OCI-LY7 (cell line): ENCODE measurements at regions of chr6 and their contacts with region 1.

Region 1: GRCh38 chr6:28683944-28684538 is 158.4 kb downstream of the GPX5 start:
- DNase-seq: peak; percentile 65
- H3K4me3 ChIP-seq: no peak overlapping the region
- H3K27ac ChIP-seq: no peak overlapping the region
- H3K4me1 ChIP-seq: peaks cover 3% of the 10 kb centered on the region
- CTCF ChIP-seq: peak; percentile 85

Region 2: DNA sequence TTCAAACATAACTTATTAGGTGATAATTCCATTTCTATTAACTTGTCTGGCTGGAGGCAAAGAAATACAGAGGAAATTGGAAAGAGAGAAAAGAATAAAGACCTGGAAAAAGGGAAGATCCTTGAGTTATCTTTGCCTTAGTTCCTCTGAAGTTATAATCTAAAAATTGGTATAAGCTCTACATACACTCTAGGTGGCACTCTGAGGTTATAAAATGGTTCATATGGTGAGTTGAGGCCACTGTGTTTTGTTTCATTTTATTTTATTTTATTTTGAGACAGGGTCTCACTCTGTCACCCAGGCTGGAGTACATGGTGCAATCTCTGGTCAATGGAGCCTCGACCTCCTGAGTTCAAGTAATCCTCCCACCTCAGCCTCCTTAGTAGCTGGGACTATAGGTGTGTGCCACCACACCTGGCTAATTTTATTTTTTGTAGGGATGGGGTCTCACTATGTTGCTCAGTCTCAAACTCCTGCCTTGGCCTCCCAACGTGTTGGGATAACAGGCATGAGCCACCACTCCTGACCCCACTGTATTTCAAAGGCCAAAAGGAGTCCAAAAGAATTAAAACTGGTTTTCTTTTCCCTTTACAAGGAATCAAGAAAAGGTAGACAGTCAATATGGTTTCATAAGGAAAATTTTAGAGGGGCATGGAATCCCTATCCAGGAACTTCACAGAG is 187.8 kb before region 1 on chr6:
- CTCF ChIA-PET with region 1: no interaction called
- POLR2A ChIA-PET with region 1: no interaction called
- intact Hi-C with region 1: loop called (anchors 2 kb)
- DNase-seq: peak; percentile 20
- H3K4me3 ChIP-seq: no peak overlapping the region
- H3K27ac ChIP-seq: no peak overlapping the region
- H3K4me1 ChIP-seq: no peaks in the 10 kb centered on the region
- CTCF ChIP-seq: peak; percentile 64

Region 3: DNA sequence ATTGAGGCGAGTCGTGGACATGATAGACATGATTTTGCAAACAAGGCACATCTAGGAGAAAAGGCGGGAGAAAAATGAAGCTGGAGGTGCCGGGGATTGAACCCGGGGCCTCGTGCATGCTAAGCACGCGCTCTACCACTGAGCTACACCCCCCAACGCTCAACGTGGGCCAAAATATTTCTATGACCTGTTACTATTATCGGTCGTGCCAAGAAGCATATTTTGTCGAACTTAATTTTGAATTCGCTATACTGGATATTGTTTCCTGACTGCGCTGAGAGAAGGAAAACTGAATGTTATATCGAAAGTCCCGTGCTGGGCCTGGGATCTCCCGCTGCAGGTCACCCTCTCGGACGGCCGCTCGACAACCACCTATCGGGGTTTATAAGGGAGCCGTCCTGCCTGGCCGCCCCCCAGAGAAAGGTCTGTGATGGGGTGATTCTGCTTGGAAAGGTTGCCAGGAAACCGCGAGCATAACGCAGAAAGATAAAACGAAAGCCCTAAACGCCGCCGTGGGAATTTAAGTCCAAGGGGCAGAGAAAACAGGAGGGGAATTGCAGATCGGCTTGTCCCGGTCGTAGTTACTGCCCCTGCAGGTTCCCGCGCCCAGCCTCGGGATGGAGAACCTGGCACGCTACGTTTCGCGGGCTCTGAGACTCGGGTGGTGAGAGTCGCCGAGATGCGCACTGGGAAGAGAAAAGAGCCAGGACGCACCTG is 179.7 kb after region 1 on chr6:
- CTCF ChIA-PET with region 1: no interaction called
- POLR2A ChIA-PET with region 1: no interaction called
- intact Hi-C with region 1: no loop called
- DNase-seq: peak; percentile 79
- H3K4me3 ChIP-seq: peak overlapping the region; percentile 80
- H3K27ac ChIP-seq: peak overlapping the region; percentile 37
- H3K4me1 ChIP-seq: peaks cover 37% of the 10 kb centered on the region
- CTCF ChIP-seq: no peak

Region 4: DNA sequence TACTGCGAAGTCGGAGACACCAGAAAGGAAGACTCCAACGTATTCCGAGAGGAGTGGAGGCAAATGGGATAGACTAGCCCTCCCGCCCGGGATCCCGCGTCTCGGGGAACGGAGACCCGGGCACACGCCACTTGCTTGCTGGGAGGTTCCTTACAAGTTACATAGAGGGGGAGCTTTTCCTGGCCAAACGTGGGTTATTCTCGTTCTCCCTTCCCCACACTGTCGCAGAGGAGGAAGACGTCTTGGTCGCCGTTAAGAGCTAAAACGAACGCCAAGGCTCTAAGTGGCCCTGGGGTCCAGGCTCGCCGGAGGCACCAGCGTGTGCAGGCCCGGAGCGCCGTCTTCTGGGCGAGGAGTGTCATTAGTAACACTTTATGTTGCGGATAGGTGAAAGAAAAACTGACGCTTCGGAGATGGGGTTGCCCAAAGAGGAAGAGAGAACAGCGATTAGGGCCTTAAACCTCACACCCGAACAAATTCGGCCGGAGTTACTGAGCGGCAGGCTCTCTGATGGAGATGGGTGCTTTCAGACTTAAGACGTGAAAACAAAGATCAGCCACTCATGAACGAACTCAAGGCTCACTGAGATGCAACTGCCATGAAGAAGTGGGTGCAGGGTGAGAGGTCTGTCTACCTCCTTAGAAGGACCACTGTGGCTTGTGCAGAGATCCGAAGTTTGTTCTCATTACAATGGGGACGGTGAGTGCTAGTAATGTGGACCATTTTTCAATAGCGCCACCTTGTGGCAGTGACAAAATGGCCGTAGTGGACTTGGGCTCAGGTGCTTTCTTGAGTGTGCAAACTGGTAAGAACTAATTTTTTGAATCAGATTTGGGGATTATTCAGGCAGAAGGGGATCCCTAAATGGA is 332.8 kb after region 1 on chr6:
- CTCF ChIA-PET with region 1: no interaction called
- POLR2A ChIA-PET with region 1: no interaction called
- intact Hi-C with region 1: loop called (anchors 1 kb)
- DNase-seq: peak; percentile 90
- H3K4me3 ChIP-seq: peak overlapping the region; percentile 67
- H3K27ac ChIP-seq: peak overlapping the region; percentile 56
- H3K4me1 ChIP-seq: no peaks in the 10 kb centered on the region
- CTCF ChIP-seq: peak; percentile 97

Region 5: GRCh38 chr6:29466241-29466640 is 782.2 kb after region 1 on chr6:
- CTCF ChIA-PET with region 1: no interaction called
- POLR2A ChIA-PET with region 1: no interaction called
- intact Hi-C with region 1: no loop called
- DNase-seq: no peak
- H3K4me3 ChIP-seq: no peak overlapping the region
- H3K27ac ChIP-seq: no peak overlapping the region
- H3K4me1 ChIP-seq: no peaks in the 10 kb centered on the region
- CTCF ChIP-seq: no peak